Gastrocnemius medialis (tissue), 4 donors: ENCODE measurements at regions of chr11 and their contacts with region 1.

Region 1: DNA sequence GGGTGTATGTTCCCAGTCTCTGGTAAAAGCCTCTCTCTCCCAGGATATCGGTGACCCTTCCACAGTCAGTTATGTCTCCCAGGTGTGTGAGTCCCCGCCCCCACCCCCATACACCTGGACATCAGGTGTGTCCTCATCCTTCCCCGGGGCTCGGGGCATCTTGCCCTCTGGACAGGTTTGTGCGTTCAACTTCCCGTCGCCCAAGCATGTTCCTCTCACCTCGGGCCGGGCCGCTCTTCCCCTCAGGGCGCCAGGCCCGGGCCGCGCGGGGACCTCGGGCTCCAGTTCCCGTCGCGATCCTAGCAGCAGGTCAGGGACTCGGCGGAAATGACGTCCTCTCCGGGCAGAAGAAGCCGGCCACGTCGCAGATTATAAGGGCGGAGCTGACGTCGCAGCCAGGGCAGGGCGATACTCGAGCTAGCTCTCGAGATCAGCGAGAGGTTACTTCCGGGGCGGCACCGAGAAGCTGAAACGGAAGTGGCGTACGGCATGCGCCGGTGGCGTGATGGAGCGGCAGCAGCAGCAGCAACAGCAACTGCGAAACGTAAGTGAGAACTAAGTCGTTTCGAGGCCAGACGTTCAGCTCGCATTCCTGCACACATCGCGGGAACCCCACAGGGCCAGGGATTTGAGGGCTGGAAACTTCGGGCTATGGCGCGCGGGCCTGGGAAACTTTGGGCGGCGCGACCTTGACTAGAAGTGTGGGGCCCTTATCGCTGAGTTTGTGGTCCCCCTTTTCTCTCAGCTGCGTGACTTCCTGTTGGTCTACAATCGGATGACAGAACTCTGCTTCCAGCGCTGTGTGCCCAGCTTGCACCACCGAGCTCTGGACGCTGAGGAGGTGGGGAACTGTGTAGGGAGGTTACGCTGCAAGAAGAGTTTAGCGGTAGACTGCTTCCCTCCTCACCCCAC is at the starts of genes ARFIP2 and TIMM10B:
- DNase-seq: peak; percentile 98 to 99
- ATAC-seq: peak; percentile 98 to 99
- H3K4me3 ChIP-seq: peak within 1 kb of the TSS; percentile 85 to 95 (median 87)
- H3K27ac ChIP-seq: peak within 1 kb of the TSS; percentile 93 to 97 (median 94)
- H3K4me1 ChIP-seq: peaks cover 24 to 31% of the 10 kb centered on the region in 2 donors
- H3K27me3 ChIP-seq: no peaks in the 10 kb centered on the region
- CTCF ChIP-seq: no peak
- POLR2A ChIP-seq: peak; percentile 93 to 97
- total RNA-seq, gene ARFIP2: 20.1 to 27.8 (median 24.4) TPM
- total RNA-seq, gene TIMM10B: 10.0 to 14.5 (median 12.4) TPM

Region 2: DNA sequence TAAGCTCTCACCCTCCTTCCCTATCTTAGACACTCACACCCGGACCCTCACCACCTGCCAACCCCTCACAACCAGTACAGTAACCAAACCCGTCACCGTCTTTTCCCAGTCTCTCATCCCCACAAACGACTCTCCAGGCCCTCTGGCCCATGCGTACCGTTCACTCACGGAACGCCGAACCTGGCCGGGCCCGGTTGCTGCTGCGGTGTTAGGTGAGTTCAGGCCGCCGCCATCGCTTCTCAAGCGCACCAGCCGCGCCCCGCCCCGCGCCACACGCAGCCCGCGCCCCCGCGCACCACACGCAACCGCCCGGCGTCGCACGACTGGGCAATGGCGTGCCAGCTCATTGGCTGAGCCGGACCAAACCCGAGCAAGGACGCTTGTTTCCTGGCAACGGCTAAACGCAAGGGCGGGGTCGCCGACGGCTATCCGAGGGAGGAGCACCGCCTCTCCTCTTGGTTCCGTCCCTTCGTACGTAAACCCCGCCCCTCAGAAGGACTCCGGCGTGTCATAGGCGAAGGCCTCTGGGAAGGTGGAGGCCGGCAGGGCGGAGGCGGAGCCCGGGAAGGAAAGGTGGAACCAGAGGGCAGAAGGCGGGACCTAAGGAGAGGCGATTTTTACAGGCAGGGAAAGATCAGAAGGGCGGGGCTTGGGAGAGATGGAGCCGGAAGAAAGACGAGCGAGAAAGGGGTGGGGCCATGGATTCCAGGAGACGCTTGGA is 246.7 kb before region 1 on chr11 and contains the start of gene FHIP1B:
- in situ Hi-C with region 1: loop called in 3 of 4 experiments (anchors 25 kb)
- intact Hi-C with region 1: loop called (anchors 5 kb)
- DNase-seq: peak; percentile 100
- ATAC-seq: peak; percentile 96 to 98
- H3K4me3 ChIP-seq: peak within 1 kb of the TSS; percentile 73 to 79 (median 76)
- H3K27ac ChIP-seq: peak within 1 kb of the TSS; percentile 81 to 88 (median 86)
- H3K4me1 ChIP-seq: peaks cover 14 to 24% of the 10 kb centered on the region in 2 donors
- H3K27me3 ChIP-seq: no peaks in the 10 kb centered on the region
- CTCF ChIP-seq: no peak
- POLR2A ChIP-seq: peak; percentile 47 to 60
- total RNA-seq, gene FHIP1B: 23.9 to 41.7 (median 33.9) TPM

Region 3: GRCh38 chr11:6405052-6405667 is 76.1 kb before region 1 on chr11:
- in situ Hi-C with region 1: no loop called
- intact Hi-C with region 1: no loop called
- DNase-seq: no peak
- ATAC-seq: no peak
- H3K4me3 ChIP-seq: no peak overlapping the region
- H3K27ac ChIP-seq: no peak overlapping the region
- H3K4me1 ChIP-seq: no peaks in the 10 kb centered on the region
- H3K27me3 ChIP-seq: no peaks in the 10 kb centered on the region
- CTCF ChIP-seq: no peak
- POLR2A ChIP-seq: no peak

Region 4: DNA sequence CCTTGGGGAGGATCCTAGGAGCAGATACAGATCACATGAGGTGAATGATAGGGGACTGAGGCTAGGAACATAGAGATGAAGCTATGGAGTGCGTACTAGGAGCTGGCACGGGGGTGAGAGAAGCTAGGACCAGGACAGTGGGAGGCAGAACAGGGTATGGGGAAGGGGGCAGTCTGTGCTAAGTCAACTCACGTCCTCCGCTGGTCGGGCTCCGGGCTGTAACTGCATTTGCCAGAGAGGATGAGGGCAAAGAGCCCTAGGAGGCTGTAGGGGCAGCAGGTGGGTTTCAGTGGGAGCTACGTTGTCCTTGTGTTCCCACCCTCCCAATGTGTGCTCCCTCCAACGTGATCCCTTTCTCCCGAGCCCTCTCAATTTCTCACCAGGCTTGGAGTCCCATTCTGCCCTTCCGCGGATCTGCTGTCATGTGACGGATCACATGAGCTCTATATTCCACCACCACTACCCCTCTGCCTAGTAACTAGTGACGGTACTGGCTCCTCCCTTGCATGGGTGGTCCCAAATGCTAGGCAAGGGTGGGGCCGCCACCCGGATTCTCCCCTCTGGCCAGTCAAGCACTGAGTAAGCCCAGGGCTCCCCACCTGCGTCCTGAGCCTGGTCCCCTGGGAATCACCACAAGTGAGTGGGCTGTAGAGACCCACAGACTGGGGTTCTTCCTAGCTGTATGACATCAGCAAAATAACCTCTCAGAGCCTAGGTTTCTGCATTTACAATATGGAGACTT is 137.9 kb after region 1 on chr11 and contains the start of gene TPP1:
- in situ Hi-C with region 1: no loop called
- intact Hi-C with region 1: loop called (anchors 5 kb)
- DNase-seq: peak; percentile 90 to 93
- ATAC-seq: peak; percentile 100
- H3K4me3 ChIP-seq: peak within 1 kb of the TSS; percentile 65 to 84 (median 74)
- H3K27ac ChIP-seq: peak within 1 kb of the TSS; percentile 80 to 94 (median 90)
- H3K4me1 ChIP-seq: peaks cover 15 to 16% of the 10 kb centered on the region in 2 donors
- H3K27me3 ChIP-seq: no peaks in the 10 kb centered on the region
- CTCF ChIP-seq: no peak
- POLR2A ChIP-seq: peak; percentile 68 to 85
- total RNA-seq, gene TPP1: 13.9 to 43.4 (median 19.6) TPM

Region 5: DNA sequence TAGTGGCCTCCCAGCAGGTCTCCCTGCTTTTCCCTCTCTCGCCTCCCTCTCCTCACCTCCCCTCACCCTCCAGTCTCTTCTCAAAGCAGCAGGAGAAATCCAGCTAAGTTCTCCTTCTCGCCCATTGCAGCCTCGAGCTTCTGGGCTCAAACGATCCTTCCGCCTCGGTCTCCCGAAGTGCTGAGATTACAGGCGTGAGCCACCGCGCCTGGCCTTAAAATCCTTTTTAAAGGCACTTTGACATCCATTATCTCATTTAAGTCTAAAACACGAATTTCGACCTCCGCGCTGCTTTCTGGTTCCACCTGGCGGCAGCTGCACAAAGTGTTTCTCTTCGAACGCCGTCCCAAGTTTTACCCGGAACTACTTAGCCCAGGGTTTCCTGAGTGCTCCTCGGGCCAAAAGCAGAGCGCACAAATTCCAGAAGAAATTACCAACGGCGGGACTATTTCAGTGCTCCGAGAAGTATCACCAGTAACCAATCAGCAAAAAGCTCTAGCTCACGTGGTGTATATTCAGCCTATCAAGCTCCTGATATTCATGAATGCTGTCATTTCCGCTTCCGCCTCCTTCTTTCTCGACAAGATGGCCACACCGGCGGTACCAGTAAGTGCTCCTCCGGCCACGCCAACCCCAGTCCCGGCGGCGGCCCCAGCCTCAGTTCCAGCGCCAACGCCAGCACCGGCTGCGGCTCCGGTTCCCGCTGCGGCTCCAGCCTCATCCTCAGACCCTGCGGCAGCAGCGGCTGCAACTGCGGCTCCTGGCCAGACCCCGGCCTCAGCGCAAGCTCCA is 1505.7 kb after region 1 on chr11 and contains the start of gene EIF3F:
- in situ Hi-C with region 1: no loop called
- intact Hi-C with region 1: loop called (anchors 2 kb)
- DNase-seq: peak; percentile 93
- ATAC-seq: peak; percentile 100
- H3K4me3 ChIP-seq: peak within 1 kb of the TSS; percentile 79 to 85 (median 84)
- H3K27ac ChIP-seq: peak within 1 kb of the TSS; percentile 77 to 86 (median 78)
- H3K4me1 ChIP-seq: peaks cover 28% of the 10 kb centered on the region in 2 donors
- H3K27me3 ChIP-seq: no peaks in the 10 kb centered on the region
- CTCF ChIP-seq: peak; percentile 83 to 90 (median 86)
- POLR2A ChIP-seq: peak; percentile 18 to 40
- total RNA-seq, gene EIF3F: 187 to 303 (median 239) TPM